Endothelial cell of umbilical vein (primary cell): ENCODE measurements at regions of chr10 and their contacts with region 1.

Region 1: DNA sequence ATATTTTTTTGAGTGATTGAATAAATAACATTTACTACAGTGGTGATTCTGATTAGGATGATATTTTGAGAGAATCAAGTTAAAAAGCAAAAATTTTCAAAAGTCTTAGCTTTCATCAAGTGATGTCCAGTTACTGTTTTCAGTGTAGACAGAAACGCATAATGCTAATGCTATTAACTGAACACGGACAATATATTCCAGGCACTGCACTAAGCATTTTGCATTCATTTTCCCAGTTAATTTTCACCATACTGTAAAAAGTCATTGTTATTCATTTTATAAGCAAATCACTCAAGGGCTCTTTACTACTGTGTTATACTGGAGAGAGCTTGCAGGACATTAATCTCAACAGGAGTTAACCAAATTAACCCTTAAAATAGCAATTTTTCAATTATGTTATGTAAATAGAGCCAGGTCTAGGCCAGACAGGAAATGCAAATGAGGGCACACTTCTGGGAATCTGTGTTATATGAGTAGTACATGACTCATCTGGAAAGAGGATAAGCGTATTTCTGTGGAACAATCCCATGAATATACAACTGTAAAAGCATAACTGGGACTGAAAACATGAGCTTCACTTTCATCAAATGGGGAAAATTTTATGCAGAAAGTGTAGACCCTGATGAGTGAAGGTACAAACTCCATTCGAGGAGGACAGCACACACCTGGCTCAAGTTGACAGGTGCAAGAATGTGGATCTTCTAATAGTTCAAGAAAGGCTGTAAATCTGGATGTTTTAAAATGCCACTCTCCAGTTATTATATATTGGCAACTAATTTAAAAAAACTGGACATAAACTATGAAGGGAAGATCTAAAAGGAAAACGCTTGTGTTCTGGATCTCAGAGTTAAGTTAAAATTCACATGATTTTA is 75.4 kb downstream of the ANK3 start:
- DNase-seq: peak; percentile 88
- H3K4me3 ChIP-seq: peak overlapping the region in 1 of 3 experiments; percentile 8
- H3K27ac ChIP-seq: peak overlapping the region; percentile 94
- H3K4me1 ChIP-seq: peaks cover 39% of the 10 kb centered on the region
- H3K27me3 ChIP-seq: no peaks in the 10 kb centered on the region
- CTCF ChIP-seq: no peak
- POLR2A ChIP-seq: no peak

Region 2: GRCh38 chr10:60299961-60300883 is 14.1 kb before region 1 on chr10:
- CTCF ChIA-PET with region 1: interaction called, 15 read pairs
- POLR2A ChIA-PET with region 1: no interaction called
- dilution Hi-C with region 1: no loop called
- intact Hi-C with region 1: loop called (anchors 1 kb)
- DNase-seq: peak; percentile 67
- H3K4me3 ChIP-seq: no peak overlapping the region
- H3K27ac ChIP-seq: peak overlapping the region; percentile 39
- H3K4me1 ChIP-seq: peaks cover 17% of the 10 kb centered on the region
- H3K27me3 ChIP-seq: no peaks in the 10 kb centered on the region
- CTCF ChIP-seq: no peak
- POLR2A ChIP-seq: no peak

Region 3: GRCh38 chr10:60335708-60336107 is 21.4 kb after region 1 on chr10:
- CTCF ChIA-PET with region 1: interaction called, 16 read pairs
- POLR2A ChIA-PET with region 1: no interaction called
- dilution Hi-C with region 1: no loop called
- intact Hi-C with region 1: no loop called
- DNase-seq: peak; percentile 27
- H3K4me3 ChIP-seq: no peak overlapping the region
- H3K27ac ChIP-seq: no peak overlapping the region
- H3K4me1 ChIP-seq: no peaks in the 10 kb centered on the region
- H3K27me3 ChIP-seq: no peaks in the 10 kb centered on the region
- CTCF ChIP-seq: peak in 1 of 2 donors; percentile 12
- POLR2A ChIP-seq: no peak

Region 4: GRCh38 chr10:60372436-60372835 is 58.1 kb after region 1 on chr10:
- CTCF ChIA-PET with region 1: no interaction called
- POLR2A ChIA-PET with region 1: no interaction called
- dilution Hi-C with region 1: no loop called
- intact Hi-C with region 1: no loop called
- DNase-seq: no peak
- H3K4me3 ChIP-seq: no peak overlapping the region
- H3K27ac ChIP-seq: no peak overlapping the region
- H3K4me1 ChIP-seq: no peaks in the 10 kb centered on the region
- H3K27me3 ChIP-seq: no peaks in the 10 kb centered on the region
- CTCF ChIP-seq: no peak
- POLR2A ChIP-seq: no peak

Region 5: GRCh38 chr10:60384708-60385398 is 70.5 kb after region 1 on chr10:
- CTCF ChIA-PET with region 1: interaction called, 8 read pairs
- POLR2A ChIA-PET with region 1: no interaction called
- dilution Hi-C with region 1: no loop called
- intact Hi-C with region 1: loop called (anchors 2 kb)
- DNase-seq: peak; percentile 77
- H3K4me3 ChIP-seq: no peak overlapping the region
- H3K27ac ChIP-seq: peak overlapping the region; percentile 40
- H3K4me1 ChIP-seq: peaks cover 31% of the 10 kb centered on the region
- H3K27me3 ChIP-seq: no peaks in the 10 kb centered on the region
- CTCF ChIP-seq: no peak
- POLR2A ChIP-seq: peak; percentile 71

Region 6: DNA sequence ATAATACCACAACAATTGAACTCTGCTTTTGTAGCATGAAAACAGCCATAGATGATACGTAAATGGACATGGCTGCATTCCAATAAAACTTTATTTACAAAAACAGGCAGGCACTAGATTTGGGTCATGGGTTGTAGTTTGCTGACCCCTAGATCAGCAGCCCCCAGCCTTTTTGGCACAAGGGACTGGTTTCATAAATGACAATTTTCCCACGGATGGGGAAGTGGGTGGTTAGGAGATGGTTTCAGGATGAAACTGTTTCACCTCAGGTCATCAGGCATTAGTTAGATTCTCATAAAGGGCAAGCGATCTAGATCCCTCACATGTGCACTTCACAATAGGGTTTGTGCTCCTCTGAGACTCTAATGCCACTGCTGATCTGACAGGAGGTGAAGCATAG is 91.9 kb after region 1 on chr10:
- CTCF ChIA-PET with region 1: no interaction called
- POLR2A ChIA-PET with region 1: no interaction called
- dilution Hi-C with region 1: no loop called
- intact Hi-C with region 1: no loop called
- DNase-seq: no peak
- H3K4me3 ChIP-seq: no peak overlapping the region
- H3K27ac ChIP-seq: no peak overlapping the region
- H3K4me1 ChIP-seq: peaks cover 2% of the 10 kb centered on the region
- H3K27me3 ChIP-seq: no peaks in the 10 kb centered on the region
- CTCF ChIP-seq: no peak
- POLR2A ChIP-seq: no peak